SK-N-SH (cell line): ENCODE measurements at regions of chr18 and their contacts with region 1.

Region 1: DNA sequence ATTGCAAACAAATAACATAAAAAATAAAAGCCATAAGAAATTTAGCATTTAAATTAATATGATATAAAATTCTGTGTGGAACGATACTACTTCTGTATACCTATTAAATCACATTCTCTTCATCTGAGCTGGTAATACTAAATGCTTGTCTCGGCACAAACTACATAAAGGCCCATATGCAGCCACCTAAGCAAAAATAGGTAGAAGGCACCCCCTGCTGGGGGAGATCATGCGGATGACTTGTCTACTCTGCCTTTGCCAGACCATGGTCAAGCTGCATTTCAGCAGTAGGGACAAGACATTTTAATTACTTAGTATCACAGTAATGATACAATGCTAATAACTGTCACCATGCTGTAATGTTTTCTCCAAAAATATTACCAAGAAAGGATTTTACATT is 108.0 kb downstream of the CDH19 start:
- DNase-seq: peak; percentile 26
- H3K4me3 ChIP-seq: peak overlapping the region in 1 of 2 experiments; percentile 38; a peak in 1 of 4 replicates
- H3K27ac ChIP-seq: no peak overlapping the region
- H3K4me1 ChIP-seq: no peaks in the 10 kb centered on the region
- H3K27me3 ChIP-seq: no peaks in the 10 kb centered on the region
- CTCF ChIP-seq: peak; percentile 65
- EP300 ChIP-seq: no peak
- RAD21 ChIP-seq: peak; percentile 89

Region 2: GRCh38 chr18:66511810-66512209 is 16.0 kb after region 1 on chr18:
- CTCF ChIA-PET with region 1: interaction called, 10 read pairs
- POLR2A ChIA-PET with region 1: no interaction called
- DNase-seq: no peak
- H3K4me3 ChIP-seq: no peak overlapping the region
- H3K27ac ChIP-seq: no peak overlapping the region
- H3K4me1 ChIP-seq: no peaks in the 10 kb centered on the region
- H3K27me3 ChIP-seq: no peaks in the 10 kb centered on the region
- CTCF ChIP-seq: no peak
- EP300 ChIP-seq: no peak
- RAD21 ChIP-seq: no peak